Ascending aorta (tissue), 2 donors: ENCODE measurements at regions of chr4 and their contacts with region 1.

Region 1: GRCh38 chr4:145216535-145216934 is 36.1 kb upstream of the OTUD4 start:
- DNase-seq: no peak
- H3K4me3 ChIP-seq: no peak overlapping the region
- H3K27ac ChIP-seq: no peak overlapping the region
- H3K4me1 ChIP-seq: no peaks in the 10 kb centered on the region
- H3K27me3 ChIP-seq: no peaks in the 10 kb centered on the region
- CTCF ChIP-seq: peak in 2 of 3 experiments; percentile 27 to 44

Region 2: DNA sequence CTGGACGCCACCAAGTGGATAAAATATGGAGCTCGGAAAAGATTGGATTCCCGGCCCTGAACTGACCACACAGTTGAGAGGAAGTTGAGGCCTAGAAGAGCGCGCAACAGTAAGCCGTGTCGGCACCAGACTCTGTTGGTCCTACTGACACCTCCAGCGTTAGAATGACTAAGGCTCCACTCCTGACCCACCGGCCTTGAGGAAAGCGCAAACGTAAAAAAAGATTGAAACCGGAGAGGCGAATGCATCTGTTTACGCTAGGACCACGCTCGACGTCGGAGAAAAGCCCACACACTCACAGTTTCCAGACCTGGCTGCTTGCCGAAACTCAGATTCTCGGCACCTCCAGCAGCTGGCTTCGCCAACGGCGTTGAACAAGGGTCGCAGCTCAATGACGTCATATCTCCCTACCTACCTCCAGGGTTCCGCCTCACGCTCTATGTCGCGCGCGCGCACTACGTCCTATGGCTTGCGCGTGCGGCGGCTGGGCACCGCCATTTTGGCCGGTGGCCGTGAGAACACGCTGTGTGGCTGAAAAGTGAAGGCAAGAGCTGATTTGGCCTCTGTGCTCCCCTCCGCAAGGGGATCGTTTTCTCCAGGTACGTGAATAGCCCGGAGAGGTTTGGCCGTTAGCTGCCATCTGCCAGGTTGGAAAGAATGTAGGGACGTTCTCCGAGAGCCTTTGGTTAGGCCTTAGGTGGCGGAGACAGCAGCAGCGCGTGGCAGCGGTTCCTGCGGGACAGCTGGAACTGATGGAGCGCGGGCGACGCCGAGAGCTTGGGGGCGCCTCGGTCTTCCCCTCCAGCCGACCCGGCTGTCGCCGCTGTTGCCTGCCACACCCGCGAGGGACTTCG is 118.5 kb before region 1 on chr4 and contains the starts of genes ABCE1 and ANAPC10:
- intact Hi-C with region 1: no loop called
- DNase-seq: peak; percentile 85 to 98
- H3K4me3 ChIP-seq: peak within 1 kb of the TSS; percentile 74 to 75
- H3K27ac ChIP-seq: peak within 1 kb of the TSS; percentile 87 to 90
- H3K4me1 ChIP-seq: peaks cover 4 to 18% of the 10 kb centered on the region in 2 donors
- H3K27me3 ChIP-seq: no peaks in the 10 kb centered on the region
- CTCF ChIP-seq: peak in 1 of 3 experiments; percentile 27
- total RNA-seq, gene ABCE1: 43.7 TPM
- total RNA-seq, gene ANAPC10: 2.6 TPM

Region 3: GRCh38 chr4:145260091-145260490 is 43.6 kb after region 1 on chr4:
- intact Hi-C with region 1: no loop called
- DNase-seq: no peak
- H3K4me3 ChIP-seq: no peak overlapping the region
- H3K27ac ChIP-seq: no peak overlapping the region
- H3K4me1 ChIP-seq: no peaks in the 10 kb centered on the region
- H3K27me3 ChIP-seq: no peaks in the 10 kb centered on the region
- CTCF ChIP-seq: no peak

Region 4: DNA sequence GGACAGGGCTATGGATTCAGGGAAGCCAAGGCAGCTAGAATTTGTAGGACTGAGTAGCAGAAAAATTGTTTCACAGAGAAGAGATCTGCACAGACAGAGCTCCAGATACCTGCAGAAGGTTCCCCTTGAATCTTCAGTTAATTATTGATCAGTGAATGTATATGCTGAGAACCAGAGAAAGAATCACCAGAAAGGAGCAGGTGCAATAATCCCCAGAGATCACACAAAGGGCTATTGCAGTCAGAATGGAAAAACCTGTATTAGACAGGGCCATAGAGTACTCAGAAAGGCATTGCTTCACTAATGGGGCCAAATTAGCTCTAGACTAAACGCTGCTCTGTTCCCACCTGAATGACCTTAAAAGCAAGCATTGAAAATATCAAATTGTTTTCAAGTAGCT is 229.6 kb after region 1 on chr4:
- intact Hi-C with region 1: no loop called
- DNase-seq: no peak
- H3K4me3 ChIP-seq: no peak overlapping the region
- H3K27ac ChIP-seq: no peak overlapping the region
- H3K4me1 ChIP-seq: no peaks in the 10 kb centered on the region
- H3K27me3 ChIP-seq: no peaks in the 10 kb centered on the region
- CTCF ChIP-seq: no peak

Region 5: DNA sequence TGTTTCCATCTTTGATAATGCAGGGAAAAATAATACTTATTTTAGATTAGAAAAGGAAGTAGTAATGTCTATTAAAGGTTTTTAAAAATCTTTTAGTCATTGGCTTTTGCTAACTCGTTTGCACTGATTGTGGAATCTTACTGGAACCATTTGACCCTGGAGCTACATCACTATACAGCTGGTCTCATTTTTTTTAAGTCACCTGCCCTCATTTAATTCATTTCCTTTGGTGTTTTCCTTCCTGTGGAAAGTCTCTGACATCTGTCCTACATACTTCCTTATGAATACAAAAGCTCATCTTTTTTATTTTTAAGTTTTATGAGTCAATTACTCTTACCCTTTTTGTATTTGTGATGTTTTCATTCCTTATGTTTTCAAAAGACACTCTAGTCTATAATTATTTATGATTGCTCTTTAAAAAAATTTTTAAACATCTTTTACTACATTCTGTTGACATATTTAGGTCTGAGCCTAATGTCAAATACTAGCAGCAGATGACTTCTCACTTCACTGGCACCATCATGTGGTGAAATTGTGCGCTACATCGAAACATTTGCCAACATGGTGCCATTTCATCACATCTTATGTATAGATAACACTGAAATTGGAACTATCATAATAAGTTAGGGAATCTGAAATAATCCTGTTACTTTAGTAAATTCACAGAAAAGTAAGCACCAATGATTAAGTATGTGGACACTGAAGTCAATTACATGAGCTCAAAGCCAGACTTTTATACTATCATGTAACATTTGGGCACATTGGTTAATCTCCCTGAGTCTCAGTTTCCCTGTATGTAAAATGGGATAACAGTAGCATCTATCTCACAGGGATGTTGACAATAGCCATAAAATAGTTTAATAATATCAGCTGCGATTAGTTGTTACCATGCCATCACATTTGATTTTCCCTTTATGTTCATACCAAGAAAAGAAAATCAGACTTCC is 393.2 kb after region 1 on chr4:
- intact Hi-C with region 1: loop called (anchors 5 kb)
- DNase-seq: peak in 1 of 2 donors; percentile 84
- H3K4me3 ChIP-seq: no peak overlapping the region
- H3K27ac ChIP-seq: no peak overlapping the region
- H3K4me1 ChIP-seq: no peaks in the 10 kb centered on the region
- H3K27me3 ChIP-seq: no peaks in the 10 kb centered on the region
- CTCF ChIP-seq: peak; percentile 39 to 64 (median 55)